Thyroid gland (tissue), 4 donors: ENCODE measurements at regions of chr7 and their contacts with region 1.

Region 1: DNA sequence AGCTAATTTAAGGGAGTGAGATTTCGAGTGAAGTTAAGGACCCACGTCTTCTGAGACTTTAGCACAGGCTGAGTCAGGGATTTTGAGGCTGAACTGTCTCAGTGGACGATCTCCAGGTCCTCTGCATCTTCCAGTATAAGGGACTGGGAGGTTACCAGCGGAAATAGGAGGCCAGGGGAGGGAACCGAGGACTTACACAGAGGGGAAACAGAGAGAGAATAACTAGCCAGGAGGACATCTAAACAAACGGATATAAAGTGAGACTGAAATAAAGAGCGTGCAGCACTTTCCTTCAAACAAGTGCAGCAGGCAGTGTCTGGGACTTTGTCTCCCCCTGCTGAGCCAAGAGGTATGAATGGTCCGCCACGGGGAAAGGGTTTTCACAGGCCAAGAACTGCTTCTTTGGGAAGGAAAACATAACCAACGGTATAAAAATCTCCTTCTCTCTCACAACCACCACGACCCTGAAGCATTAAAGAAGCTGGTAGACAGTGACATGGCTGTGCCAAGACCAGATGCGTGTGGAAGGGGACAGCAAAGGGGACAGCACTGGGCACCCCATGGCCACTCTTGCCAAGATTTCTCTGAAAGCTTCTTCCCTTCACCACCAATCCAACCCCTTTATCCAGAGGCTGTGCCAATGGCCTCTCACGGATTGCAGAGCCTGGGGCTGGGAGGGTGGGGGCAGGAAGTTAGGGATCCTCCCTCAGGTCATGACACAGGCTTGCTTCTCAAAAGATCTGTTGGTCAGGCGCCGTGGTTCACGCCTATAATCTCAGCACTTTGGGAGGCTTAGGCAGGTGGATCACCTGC is 72.0 kb downstream of the SLC37A3 start:
- DNase-seq: peak; percentile 75 to 82
- H3K4me3 ChIP-seq: no peak overlapping the region
- H3K27ac ChIP-seq: no peak overlapping the region
- H3K4me1 ChIP-seq: peaks cover 5 to 18% of the 10 kb centered on the region in 2 donors
- H3K27me3 ChIP-seq: no peaks in the 10 kb centered on the region
- CTCF ChIP-seq: peak in 5 of 6 experiments; percentile 64 to 88 (median 75)
- POLR2A ChIP-seq: no peak

Region 2: DNA sequence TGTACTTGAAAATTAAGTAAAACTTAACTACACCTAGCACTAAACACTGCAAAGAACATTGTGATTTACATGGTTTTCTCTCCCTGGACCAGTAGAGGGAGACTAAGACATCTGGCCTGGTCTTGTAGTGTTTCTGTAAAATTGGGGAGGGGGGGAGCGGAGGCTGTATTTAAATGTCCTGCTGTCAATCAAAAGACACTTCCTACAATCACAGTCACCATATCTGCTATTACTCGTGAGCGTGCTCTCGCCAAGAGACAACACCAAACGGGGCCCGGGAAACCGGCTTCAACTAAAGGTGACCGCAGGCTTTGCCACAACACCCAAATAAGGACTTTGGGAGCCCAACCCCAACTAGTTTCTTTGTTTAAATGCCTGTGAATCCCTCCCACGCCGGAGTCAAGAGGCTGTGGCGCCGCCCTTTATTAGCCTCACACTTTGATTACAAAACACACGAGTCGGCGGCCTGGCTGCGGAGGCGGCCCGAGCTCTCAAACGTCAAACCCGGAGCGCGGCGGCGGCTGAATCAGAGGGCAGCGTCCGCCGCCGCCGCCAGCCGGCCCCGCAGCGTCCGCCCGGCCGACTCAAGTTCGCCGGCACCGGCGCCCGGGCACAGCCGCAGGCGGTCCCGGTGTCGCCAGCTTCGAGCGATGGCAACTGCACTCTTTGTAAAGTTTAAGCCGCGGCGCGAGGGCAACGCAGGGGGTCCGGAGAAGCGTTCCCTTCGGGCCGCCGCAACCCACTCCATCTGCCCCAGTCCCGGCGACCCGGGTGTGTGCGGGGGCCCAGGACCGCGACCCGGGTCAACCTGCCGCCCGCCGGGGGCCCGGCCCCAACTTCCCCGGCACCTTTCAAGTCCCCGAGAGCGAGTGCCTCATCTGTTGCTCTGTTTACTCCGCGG is 150.9 kb before region 1 on chr7:
- intact Hi-C with region 1: loop called (anchors 5 kb)
- DNase-seq: peak; percentile 94 to 95
- H3K4me3 ChIP-seq: peak overlapping the region; percentile 86 to 94 (median 92)
- H3K27ac ChIP-seq: peak overlapping the region; percentile 98 to 99 (median 99)
- H3K4me1 ChIP-seq: peaks cover 11 to 18% of the 10 kb centered on the region in 2 donors
- H3K27me3 ChIP-seq: no peaks in the 10 kb centered on the region
- CTCF ChIP-seq: peak in 5 of 6 experiments; percentile 76 to 94 (median 90)
- POLR2A ChIP-seq: peak; percentile 88 to 96

Region 3: GRCh38 chr7:140397784-140398750 is 71.7 kb after region 1 on chr7 and contains the start of gene SLC37A3:
- intact Hi-C with region 1: no loop called
- DNase-seq: peak; percentile 90 to 91
- H3K4me3 ChIP-seq: peak within 1 kb of the TSS; percentile 81 to 99 (median 93)
- H3K27ac ChIP-seq: peak within 1 kb of the TSS; percentile 75 to 90 (median 87)
- H3K4me1 ChIP-seq: peaks cover 0 to 4% of the 10 kb centered on the region in 2 donors
- H3K27me3 ChIP-seq: no peaks in the 10 kb centered on the region
- CTCF ChIP-seq: peak in 3 of 6 experiments; percentile 21 to 47 (median 29)
- POLR2A ChIP-seq: peak in 1 of 2 donors; percentile 78
- total RNA-seq, gene SLC37A3: 71.9 to 123 (median 86.9) TPM

Region 4: DNA sequence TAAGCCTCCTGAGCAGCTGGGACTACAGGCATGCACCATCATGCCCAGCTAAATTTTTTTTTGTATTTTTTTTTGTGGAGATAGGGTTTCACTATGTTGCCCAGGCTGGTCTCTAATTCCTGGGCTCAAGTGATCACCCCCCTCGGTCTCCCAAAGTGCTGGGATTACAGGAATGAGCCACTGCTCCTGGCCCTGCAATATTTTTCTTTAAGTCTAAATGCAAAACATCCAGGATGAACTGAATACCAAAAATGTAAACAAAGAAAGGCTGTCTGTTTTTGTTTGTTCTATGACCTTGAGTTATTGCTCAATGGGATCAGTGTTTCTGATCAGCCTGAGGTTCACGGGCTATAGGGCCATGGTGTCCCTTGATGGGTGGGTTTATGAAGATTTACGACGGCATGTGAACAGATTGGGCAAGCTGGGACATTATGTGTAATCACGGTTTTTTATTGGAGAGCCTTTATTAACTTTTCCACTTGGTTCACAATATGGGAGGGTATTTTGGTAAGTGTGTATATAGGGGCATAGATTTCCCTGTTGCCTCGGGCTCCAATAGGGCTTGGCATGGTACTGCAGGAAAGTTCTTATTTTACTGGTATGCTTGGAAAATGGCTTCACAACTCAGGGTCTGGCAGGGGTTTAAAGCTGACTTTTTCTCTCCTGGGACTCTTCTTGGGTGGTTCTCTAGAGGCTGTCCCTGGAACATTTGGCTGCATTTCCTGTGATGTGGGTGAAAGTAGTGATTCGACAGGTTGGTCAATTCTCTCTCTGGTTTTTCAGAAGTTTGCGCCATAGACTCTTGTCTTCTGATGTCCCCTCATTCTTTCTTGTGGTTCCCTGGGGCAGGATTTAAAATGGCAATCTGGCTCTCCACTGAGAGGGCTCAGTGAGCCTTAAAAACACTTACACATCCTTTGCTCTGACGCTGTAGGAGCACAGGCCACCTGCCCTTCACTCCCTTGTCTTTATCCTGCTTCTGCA is 646.8 kb after region 1 on chr7:
- intact Hi-C with region 1: no loop called
- DNase-seq: no peak
- H3K4me3 ChIP-seq: no peak overlapping the region
- H3K27ac ChIP-seq: no peak overlapping the region
- H3K4me1 ChIP-seq: peaks cover 0 to 4% of the 10 kb centered on the region in 2 donors
- H3K27me3 ChIP-seq: no peaks in the 10 kb centered on the region
- CTCF ChIP-seq: no peak
- POLR2A ChIP-seq: no peak